ENCODE measurements at regions of chr19 and their contacts with region 1.

Region 1: DNA sequence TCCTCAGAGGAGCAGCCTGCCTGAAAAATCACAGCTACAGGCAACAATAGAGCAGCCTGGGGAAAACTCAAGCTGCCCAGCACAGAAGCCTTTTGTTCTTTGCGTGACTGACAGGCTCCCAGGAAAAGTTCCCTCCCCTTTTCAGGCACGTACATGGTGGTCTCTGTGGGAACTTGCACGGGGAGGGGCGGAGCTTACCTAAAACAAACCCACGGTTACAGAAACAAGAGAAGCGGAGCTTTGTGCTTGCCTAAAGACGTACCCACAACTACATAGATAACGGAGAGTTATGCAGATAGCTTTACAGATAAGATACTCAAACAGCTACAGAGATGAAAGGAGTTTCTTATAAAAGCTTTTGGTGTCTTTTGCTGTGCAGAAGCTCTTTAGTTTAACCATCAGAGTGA is 11.4 kb downstream of the ETFB start:
- DNase-seq: no peak
- ATAC-seq: peak; percentile 80
- H3K4me3 Mint-ChIP-seq: peak overlapping the region; percentile 72
- H3K27ac Mint-ChIP-seq: peak overlapping the region; percentile 84
- H3K4me1 Mint-ChIP-seq: peaks cover 25% of the 10 kb centered on the region
- H3K27me3 Mint-ChIP-seq: peaks cover under 1% of the 10 kb centered on the region

Region 2: DNA sequence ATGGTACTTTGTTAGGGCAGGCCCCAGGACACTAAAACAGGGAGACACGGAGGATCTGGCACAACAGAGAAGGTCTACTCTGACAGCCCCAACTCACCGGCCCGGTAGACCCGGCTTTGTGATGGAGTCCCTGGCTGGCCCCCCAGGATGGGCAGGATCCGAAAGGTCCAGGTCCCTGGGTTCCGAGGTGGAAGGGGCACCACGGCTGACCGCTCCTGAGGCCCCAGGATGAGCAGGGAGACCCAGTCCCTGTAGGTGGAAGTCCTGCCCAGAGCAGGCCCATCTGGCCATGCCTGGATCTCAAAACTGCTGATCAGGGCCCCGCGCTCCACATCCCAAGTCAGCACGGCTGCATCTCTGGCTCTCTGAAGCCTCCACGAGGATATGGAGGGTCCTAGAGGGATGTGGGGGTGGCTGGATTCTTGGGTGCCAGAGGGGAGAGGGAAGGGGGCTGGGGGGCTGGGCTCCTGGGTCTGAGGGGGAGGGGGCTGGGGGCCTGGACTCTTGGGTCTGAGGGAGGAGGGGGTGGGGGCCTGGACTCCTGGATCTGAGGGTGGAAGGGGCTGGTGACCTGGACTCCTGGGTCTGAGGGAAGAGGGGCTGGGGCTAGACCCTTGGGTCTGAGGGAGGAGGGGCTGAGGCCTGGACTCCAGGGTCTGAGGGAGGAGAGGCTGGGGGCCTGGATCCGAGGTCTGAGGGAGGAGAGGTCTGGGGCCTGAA is 17.4 kb before region 1 on chr19:
- POLR2A ChIA-PET with region 1: no interaction called
- DNase-seq: no peak
- ATAC-seq: no peak
- H3K4me3 Mint-ChIP-seq: no peak overlapping the region
- H3K27ac Mint-ChIP-seq: no peak overlapping the region
- H3K4me1 Mint-ChIP-seq: peaks cover 12% of the 10 kb centered on the region
- H3K27me3 Mint-ChIP-seq: peaks cover 14% of the 10 kb centered on the region

Region 3: GRCh38 chr19:51367565-51368365 is 13.0 kb after region 1 on chr19:
- POLR2A ChIA-PET with region 1: interaction called, 11 read pairs
- DNase-seq: peak; percentile 96
- ATAC-seq: peak; percentile 73
- H3K4me3 Mint-ChIP-seq: peak overlapping the region; percentile 94
- H3K27ac Mint-ChIP-seq: peak overlapping the region; percentile 94
- H3K4me1 Mint-ChIP-seq: peaks cover 53% of the 10 kb centered on the region
- H3K27me3 Mint-ChIP-seq: no peaks in the 10 kb centered on the region

Region 4: GRCh38 chr19:51372649-51373504 is 18.1 kb after region 1 on chr19 and contains the start of gene NKG7:
- POLR2A ChIA-PET with region 1: interaction called, 10 read pairs
- DNase-seq: peak; percentile 79
- ATAC-seq: peak; percentile 84
- H3K4me3 Mint-ChIP-seq: peak within 1 kb of the TSS; percentile 85
- H3K27ac Mint-ChIP-seq: peak within 1 kb of the TSS; percentile 99
- H3K4me1 Mint-ChIP-seq: peaks cover 65% of the 10 kb centered on the region
- H3K27me3 Mint-ChIP-seq: no peaks in the 10 kb centered on the region
- total RNA-seq, gene NKG7: 263 TPM

Measured in activated naive CD8-positive, alpha-beta T cell treated with anti-CD3 and anti-CD28 coated beads, Interleukin-2, amount 10 ng/mL, durations not matched to agents 7 days and 5 days (primary cell).